ENCODE measurements at regions of chr20 and their contacts with region 1.

Region 1: DNA sequence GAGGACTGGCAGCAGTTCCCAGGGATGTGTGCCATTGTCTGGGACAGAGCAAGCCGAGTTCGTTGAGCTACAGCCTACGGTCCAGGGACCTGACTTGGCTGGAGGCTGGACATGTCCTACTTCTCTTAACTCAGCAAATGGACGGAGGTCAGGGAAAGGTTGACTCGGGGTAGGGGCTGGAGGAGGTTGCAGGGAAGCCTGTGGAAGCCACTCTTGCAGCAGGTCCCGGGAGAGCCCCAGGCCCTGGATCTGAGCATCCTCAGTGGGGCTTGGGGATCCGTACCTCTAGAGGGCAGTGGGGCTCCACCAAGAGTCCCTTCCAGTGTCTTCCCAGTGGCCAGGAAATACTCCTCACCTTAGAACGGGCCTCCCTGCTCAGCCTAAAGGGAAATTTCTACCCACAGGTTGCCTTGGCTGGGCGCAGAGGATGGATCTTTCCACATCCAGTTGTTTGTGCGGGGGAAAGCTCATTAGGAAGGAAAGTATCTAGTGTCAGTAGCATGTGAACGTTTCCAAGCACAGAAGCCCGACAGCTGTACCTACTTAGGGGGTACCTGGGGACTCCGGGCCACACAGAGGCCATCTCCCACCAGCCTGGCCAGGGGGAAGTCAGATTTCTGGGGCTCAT is 170.2 kb downstream of the NFATC2 start:
- DNase-seq: peak; percentile 29 to 75 (median 50)
- ATAC-seq: peak; percentile 60
- H3K4me3 ChIP-seq: no peak overlapping the region
- H3K4me3 Mint-ChIP-seq: no peak overlapping the region
- H3K27ac ChIP-seq: no peak overlapping the region
- H3K27ac Mint-ChIP-seq: no peak overlapping the region
- H3K4me1 ChIP-seq: peaks cover 8% of the 10 kb centered on the region
- H3K4me1 Mint-ChIP-seq: no peaks in the 10 kb centered on the region
- H3K27me3 ChIP-seq: no peaks in the 10 kb centered on the region
- H3K27me3 Mint-ChIP-seq: no peaks in the 10 kb centered on the region
- CTCF ChIP-seq: peak; percentile 83

Region 2: DNA sequence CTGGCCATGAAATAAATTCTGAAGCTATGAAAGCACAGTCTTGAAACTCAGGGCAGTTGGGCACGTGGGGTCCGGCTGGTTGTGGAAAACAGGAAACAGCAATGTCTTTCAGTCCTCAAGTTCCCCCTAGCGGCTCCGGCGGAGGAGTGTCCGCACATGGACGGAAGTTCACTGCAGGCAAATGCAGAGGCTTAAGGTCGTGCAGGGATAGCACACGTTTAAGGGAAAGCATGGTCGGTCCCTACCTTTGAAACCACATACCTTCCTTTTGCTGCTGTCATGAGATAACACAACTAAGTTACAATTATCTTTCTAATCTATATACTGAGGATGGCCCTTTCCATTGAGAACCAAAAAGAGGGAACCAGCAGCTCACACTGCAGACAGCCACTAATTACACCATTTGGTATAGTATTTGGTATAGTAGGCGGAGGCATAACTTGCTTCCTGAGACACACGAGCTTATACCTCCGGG is 222.8 kb after region 1 on chr20:
- CTCF ChIA-PET with region 1: interaction called, 3 read pairs
- POLR2A ChIA-PET with region 1: no interaction called
- intact Hi-C with region 1: loop called (anchors 1 kb)
- DNase-seq: peak; percentile 55 to 86 (median 74)
- ATAC-seq: peak; percentile 96
- H3K4me3 ChIP-seq: no peak overlapping the region
- H3K4me3 Mint-ChIP-seq: peak overlapping the region; percentile 23
- H3K27ac ChIP-seq: no peak overlapping the region
- H3K27ac Mint-ChIP-seq: no peak overlapping the region
- H3K4me1 ChIP-seq: peaks cover 7% of the 10 kb centered on the region
- H3K4me1 Mint-ChIP-seq: peaks cover 13% of the 10 kb centered on the region
- H3K27me3 ChIP-seq: no peaks in the 10 kb centered on the region
- H3K27me3 Mint-ChIP-seq: no peaks in the 10 kb centered on the region
- CTCF ChIP-seq: peak; percentile 83

Region 3: DNA sequence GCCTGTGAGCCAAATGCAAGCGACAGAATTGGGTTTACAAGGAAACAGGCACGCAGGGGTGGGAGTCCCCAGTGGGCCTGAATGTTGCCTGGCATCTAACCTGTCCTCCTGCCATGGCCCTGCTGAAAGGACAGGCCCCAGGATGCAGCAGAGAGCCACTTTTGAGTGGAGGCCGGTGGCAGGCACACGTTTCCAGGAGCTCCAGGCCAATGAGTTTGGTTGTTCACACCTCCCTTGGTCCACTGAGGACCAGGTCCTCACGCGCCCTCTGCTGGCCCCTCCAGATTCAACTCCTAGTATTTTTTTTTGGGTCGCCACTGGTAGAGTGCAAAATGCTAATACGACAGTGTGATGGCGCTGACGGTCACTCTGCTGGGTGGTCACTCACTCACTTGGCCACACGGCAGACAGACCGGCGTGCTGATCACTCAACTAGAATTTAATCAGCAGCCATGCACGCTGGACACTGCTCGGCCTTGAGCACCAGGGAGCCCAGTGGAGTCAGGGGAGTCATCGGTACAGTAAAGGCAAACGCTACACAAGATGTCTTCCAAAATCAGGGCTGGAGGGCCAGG is 252.0 kb after region 1 on chr20:
- CTCF ChIA-PET with region 1: interaction called, 3 read pairs
- POLR2A ChIA-PET with region 1: no interaction called
- intact Hi-C with region 1: loop called in 1 of 2 experiments (anchors 1 kb)
- DNase-seq: peak; percentile 35 to 73 (median 54)
- ATAC-seq: peak; percentile 68
- H3K4me3 ChIP-seq: no peak overlapping the region
- H3K4me3 Mint-ChIP-seq: no peak overlapping the region
- H3K27ac ChIP-seq: no peak overlapping the region
- H3K27ac Mint-ChIP-seq: no peak overlapping the region
- H3K4me1 ChIP-seq: no peaks in the 10 kb centered on the region
- H3K4me1 Mint-ChIP-seq: no peaks in the 10 kb centered on the region
- H3K27me3 ChIP-seq: no peaks in the 10 kb centered on the region
- H3K27me3 Mint-ChIP-seq: peaks cover 5% of the 10 kb centered on the region
- CTCF ChIP-seq: peak; percentile 74

Region 4: GRCh38 chr20:52150440-52151258 is 778.4 kb after region 1 on chr20:
- CTCF ChIA-PET with region 1: no interaction called
- POLR2A ChIA-PET with region 1: no interaction called
- intact Hi-C with region 1: loop called in 1 of 2 experiments (anchors 5 kb)
- DNase-seq: peak in 5 of 14 experiments; percentile 3 to 58 (median 41)
- ATAC-seq: peak; percentile 39
- H3K4me3 ChIP-seq: no peak overlapping the region
- H3K4me3 Mint-ChIP-seq: no peak overlapping the region
- H3K27ac ChIP-seq: no peak overlapping the region
- H3K27ac Mint-ChIP-seq: no peak overlapping the region
- H3K4me1 ChIP-seq: no peaks in the 10 kb centered on the region
- H3K4me1 Mint-ChIP-seq: no peaks in the 10 kb centered on the region
- H3K27me3 ChIP-seq: no peaks in the 10 kb centered on the region
- H3K27me3 Mint-ChIP-seq: no peaks in the 10 kb centered on the region
- CTCF ChIP-seq: peak; percentile 98